ENCODE measurements at regions of chr5 and their contacts with region 1.

Region 1: DNA sequence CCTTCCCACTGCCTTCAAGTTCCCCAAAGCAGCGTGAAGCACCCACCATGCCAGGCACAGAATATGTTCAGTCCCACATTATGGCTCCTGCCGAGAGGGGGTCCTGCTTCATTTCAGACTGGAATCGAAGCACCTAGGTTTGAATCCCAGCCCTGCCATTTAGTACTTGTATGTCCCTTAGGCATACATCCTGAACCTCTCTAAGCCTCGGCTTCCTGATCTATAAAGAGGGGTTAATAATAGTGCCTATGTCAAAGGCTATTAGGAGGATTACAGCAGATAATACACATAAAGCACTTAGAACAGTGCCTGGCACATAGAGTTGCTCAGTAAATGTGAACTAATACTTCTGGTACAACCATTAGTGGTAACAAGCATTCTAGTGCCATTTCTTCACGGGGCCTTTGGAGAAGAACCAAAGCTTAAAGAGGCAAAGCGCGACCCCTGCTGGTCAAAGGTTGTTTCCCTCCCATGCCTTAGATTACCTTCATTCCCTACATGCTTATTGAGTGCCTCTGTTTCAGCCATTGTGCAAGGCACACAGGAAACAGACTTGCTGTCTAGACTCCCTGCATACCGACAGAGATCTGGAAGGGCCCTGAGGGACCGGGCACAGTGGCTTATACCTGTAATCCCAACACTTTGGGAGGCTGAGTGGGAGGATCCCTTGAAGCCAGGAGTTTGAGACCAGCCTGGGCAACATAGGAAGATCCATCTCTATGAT is 98.2 kb downstream of the PPARGC1B start:
- DNase-seq: peak; percentile 85
- CTCF ChIP-seq: peak; percentile 81

Region 2: DNA sequence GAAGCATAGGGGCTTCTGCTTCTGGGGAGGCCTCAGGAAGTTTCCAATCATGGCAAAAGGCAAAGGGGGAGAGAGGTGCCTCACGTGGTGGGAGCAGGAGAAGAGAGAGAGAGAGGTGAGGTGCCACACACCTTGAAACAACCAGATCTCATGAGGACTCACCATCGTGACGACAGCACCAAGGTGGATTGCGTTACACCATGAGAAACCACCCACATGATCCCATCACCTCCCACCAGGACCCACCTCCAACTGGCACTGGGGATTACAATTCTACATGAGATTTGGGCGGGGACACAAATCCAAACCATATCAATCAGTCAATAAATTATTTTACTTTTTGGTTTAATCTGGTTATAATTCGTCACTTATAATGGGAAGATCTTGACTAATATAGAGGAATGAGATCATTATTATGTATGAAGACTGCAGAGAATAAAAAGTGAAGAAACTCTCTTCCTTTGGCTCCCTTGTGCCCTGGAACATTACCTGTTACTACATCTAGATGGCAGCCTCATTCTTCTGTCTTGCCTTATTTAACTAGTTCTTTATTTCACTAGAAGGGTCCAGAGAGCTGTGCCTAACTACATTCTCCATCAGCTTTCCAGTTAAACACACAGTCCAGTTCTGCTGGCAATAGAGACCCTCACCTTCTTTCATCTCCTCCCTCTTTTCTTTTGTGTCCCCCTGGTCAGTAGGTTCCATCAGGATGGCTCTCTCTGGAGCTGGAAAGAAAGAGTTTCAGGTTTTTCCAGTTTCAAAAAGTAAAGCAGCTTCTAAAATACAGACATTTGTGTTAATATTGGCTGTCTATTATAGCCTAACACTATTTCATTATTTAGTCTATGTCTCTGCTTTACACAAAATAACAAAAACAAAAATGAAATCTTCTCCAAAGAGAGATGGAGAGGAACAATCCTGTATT is 1537.8 kb before region 1 on chr5:
- in situ Hi-C with region 1: no loop called
- DNase-seq: no peak
- CTCF ChIP-seq: peak; percentile 16

Region 3: DNA sequence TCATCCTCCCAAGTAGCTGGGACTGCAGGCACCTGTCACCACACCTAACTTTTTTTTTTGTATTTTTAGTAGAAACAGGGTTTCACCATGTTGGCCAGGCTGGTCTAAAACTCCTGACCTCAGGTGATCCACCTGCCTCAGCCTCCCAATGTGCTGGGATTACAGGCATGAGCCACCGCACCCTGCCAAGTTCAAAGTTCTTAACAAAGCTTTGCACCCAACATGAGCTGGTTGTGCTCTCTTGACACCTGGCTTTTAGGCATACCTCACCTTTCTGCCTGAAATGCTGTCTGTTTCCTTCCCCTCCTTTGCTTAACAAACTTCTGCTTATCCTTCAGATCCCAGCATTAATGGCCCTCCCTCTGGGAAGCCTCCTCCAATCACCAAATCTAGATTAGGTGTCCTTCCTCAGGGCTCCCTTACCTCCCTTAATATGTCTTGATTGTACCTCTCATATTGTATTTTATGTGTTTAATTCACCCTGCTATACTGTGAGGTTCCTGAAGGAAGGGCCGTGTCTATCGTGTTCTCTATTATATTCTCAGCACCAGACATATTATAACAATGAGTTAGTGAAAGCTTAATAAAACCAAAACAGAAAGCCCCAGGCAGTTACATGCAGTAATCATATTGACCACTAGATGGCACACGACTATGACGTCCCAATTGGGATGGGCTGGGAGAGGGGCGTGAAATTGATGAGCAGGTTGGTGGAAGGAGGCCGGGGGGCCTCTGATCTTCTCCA is 161.1 kb before region 1 on chr5:
- in situ Hi-C with region 1: loop called (anchors 10 kb)
- DNase-seq: peak; percentile 63
- CTCF ChIP-seq: peak; percentile 57

Region 4: DNA sequence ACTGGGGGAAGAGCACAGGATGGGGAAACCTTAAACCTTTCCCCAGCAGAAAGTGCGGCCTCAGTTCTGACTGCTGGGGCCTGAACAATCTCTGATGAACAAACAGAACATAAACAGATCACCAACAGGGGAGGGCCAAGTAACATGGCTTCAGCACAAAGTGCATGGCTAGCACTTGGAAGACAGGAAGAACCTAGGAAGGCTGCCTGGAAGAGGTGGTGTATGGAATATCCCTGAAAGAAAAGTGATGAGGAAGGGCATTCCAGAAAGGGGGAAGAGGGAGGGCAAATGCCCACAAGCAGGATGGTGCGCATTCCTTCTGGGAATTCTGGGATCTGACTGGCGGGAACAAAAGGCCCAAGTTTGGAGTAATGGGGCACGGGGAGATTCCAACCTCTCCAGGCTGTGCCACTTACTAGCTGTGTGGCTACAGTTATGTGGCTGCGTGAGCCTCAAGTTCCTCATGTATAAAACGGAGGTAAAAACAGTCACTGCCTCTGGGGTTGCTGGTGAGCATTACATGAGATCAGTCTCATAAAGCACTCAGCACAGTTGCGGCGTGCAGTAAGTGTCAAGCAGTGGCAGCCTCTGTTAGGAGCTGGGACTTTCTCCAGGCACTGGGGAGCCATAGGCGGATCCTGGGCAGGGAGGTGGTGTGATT is 325.8 kb after region 1 on chr5:
- in situ Hi-C with region 1: no loop called
- DNase-seq: no peak
- CTCF ChIP-seq: no peak